CD4-positive, alpha-beta memory T cell (primary cell): ENCODE measurements at regions of chr2 and their contacts with region 1.

Region 1: DNA sequence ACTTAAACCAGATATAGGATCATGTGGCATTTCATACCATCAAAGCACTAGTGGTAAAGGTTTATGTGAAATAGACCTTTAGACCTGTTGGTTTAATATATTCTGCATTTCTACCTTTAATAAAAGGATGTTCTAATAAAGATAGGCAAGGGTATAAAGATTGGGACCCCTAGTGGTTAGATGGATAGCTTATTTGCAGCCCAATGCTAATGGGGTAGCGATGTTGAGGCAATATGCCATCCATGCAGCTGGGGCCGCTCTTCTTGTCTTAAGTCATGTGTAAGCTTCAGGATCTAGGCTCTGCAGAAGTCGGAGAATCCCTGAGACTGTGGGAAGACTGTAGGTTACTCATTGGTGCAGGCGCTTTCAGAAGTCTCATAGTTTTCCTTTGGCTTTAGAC is 114.9 kb downstream of the ICOS start:
- DNase-seq: peak in 4 of 5 donors; percentile 14 to 39 (median 27)
- H3K4me3 ChIP-seq: no peak overlapping the region
- H3K4me3 Mint-ChIP-seq: no peak overlapping the region
- H3K27ac ChIP-seq: no peak overlapping the region
- H3K27ac Mint-ChIP-seq: no peak overlapping the region
- H3K4me1 ChIP-seq: peaks cover 15% of the 10 kb centered on the region
- H3K4me1 Mint-ChIP-seq: peaks cover 9 to 16% (median 12%) of the 10 kb centered on the region in 4 donors
- H3K27me3 ChIP-seq: no peaks in the 10 kb centered on the region
- H3K27me3 Mint-ChIP-seq: peaks cover 0 to 1% of the 10 kb centered on the region in 2 donors

Region 2: GRCh38 chr2:203928849-203929248 is 122.6 kb before region 1 on chr2:
- CTCF ChIA-PET with region 1: interaction called, 91 read pairs
- POLR2A ChIA-PET with region 1: interaction called, 3 read pairs
- intact Hi-C with region 1: loop called (anchors 1 kb)
- DNase-seq: peak in 1 of 5 donors; percentile 45
- H3K4me3 ChIP-seq: no peak overlapping the region
- H3K4me3 Mint-ChIP-seq: no peak overlapping the region
- H3K27ac ChIP-seq: no peak overlapping the region
- H3K27ac Mint-ChIP-seq: peak overlapping the region in 1 of 7 donors; percentile 22
- H3K4me1 ChIP-seq: peaks cover 20% of the 10 kb centered on the region
- H3K4me1 Mint-ChIP-seq: peaks cover 15 to 41% (median 31%) of the 10 kb centered on the region in 4 donors
- H3K27me3 ChIP-seq: no peaks in the 10 kb centered on the region
- H3K27me3 Mint-ChIP-seq: peaks cover 1 to 2% of the 10 kb centered on the region in 2 donors

Region 3: DNA sequence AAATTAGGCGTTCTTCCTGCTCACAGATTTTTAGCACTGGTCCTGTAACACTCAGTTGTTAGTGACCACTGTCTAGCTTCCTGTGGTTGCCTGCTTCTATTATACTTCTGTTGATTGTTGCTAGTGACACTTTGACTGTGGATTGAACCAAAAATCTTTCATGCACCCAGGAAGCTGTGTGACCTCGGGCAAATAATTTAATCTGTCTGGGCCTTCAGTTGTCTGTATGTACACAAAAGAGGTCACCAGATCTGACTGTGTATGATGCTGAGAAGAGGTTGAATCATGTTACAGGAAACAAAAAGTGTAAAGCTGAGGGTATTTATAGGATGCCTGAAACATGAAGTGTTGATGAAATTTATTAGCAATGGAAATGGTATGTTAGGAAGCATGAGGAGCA is 102.2 kb before region 1 on chr2:
- CTCF ChIA-PET with region 1: interaction called, 13 read pairs
- POLR2A ChIA-PET with region 1: interaction called, 9 read pairs
- intact Hi-C with region 1: no loop called
- DNase-seq: peak in 3 of 5 donors; percentile 39 to 60 (median 45)
- H3K4me3 ChIP-seq: no peak overlapping the region
- H3K4me3 Mint-ChIP-seq: peak overlapping the region; percentile 57 to 93 (median 68)
- H3K27ac ChIP-seq: peak overlapping the region; percentile 56
- H3K27ac Mint-ChIP-seq: peak overlapping the region; percentile 88 to 98 (median 93)
- H3K4me1 ChIP-seq: peaks cover 97% of the 10 kb centered on the region
- H3K4me1 Mint-ChIP-seq: peaks cover 71 to 93% (median 83%) of the 10 kb centered on the region in 4 donors
- H3K27me3 ChIP-seq: no peaks in the 10 kb centered on the region
- H3K27me3 Mint-ChIP-seq: no peaks in the 10 kb centered on the region

Region 4: DNA sequence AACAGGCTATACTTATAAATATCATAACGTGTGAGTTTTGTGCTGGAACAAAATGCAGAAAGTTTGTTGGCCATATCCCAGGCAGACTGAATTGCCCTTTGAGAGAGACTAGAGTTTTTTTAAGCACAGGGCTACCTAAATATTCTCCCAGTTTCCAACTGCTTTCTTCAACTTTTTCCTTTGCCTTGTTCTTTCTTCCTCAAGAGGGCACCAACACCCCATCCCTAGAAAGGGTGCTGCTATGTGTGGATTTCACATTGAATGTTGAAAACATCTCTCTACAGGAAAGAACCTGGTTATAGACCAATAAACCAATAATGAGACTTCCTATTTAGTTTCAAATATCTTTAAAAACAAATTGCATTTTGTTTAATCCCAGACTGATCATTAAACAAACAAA is 27.0 kb before region 1 on chr2:
- CTCF ChIA-PET with region 1: interaction called, 40 read pairs
- POLR2A ChIA-PET with region 1: no interaction called
- intact Hi-C with region 1: loop called (anchors 2 kb)
- DNase-seq: no peak
- H3K4me3 ChIP-seq: no peak overlapping the region
- H3K4me3 Mint-ChIP-seq: no peak overlapping the region
- H3K27ac ChIP-seq: no peak overlapping the region
- H3K27ac Mint-ChIP-seq: peak overlapping the region in 4 of 7 donors; percentile 38 to 64 (median 54)
- H3K4me1 ChIP-seq: peaks cover 45% of the 10 kb centered on the region
- H3K4me1 Mint-ChIP-seq: peaks cover 27 to 41% (median 35%) of the 10 kb centered on the region in 4 donors
- H3K27me3 ChIP-seq: no peaks in the 10 kb centered on the region
- H3K27me3 Mint-ChIP-seq: no peaks in the 10 kb centered on the region

Region 5: DNA sequence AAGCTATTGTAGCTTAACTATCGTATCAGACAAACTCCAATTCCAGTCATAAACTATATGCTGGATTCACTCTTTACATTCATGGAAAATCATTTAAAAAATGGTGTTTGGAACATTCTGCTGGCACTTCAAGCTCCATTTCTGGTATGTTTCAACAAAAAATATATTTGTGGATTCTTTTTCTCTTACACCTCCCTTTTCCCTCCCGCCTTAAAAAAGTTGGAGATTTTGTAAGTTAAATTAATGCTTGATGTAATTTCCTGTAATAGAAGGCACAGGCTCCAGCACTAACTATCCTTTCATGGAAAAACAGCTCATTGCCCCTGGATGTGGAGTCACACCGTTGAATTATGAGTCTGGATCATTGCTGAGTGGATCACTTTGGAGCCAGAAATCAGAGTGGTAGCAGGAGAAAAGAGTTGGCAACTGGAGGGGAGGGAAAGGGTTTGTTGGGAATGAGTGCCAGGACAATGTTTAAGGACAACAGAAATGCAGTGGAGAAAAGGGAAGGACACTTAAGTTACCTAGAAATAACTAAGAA is 12.1 kb before region 1 on chr2:
- CTCF ChIA-PET with region 1: interaction called, 22 read pairs
- POLR2A ChIA-PET with region 1: no interaction called
- intact Hi-C with region 1: no loop called
- DNase-seq: no peak
- H3K4me3 ChIP-seq: no peak overlapping the region
- H3K4me3 Mint-ChIP-seq: no peak overlapping the region
- H3K27ac ChIP-seq: no peak overlapping the region
- H3K27ac Mint-ChIP-seq: peak overlapping the region in 1 of 7 donors; percentile 23
- H3K4me1 ChIP-seq: no peaks in the 10 kb centered on the region
- H3K4me1 Mint-ChIP-seq: peaks cover 0 to 4% (median 2%) of the 10 kb centered on the region in 4 donors
- H3K27me3 ChIP-seq: no peaks in the 10 kb centered on the region
- H3K27me3 Mint-ChIP-seq: no peaks in the 10 kb centered on the region

Region 6: GRCh38 chr2:205605628-205606304 is 1554.3 kb after region 1 on chr2:
- CTCF ChIA-PET with region 1: no interaction called
- POLR2A ChIA-PET with region 1: no interaction called
- intact Hi-C with region 1: no loop called
- DNase-seq: no peak
- H3K4me3 ChIP-seq: no peak overlapping the region
- H3K4me3 Mint-ChIP-seq: no peak overlapping the region
- H3K27ac ChIP-seq: no peak overlapping the region
- H3K27ac Mint-ChIP-seq: no peak overlapping the region
- H3K4me1 ChIP-seq: no peaks in the 10 kb centered on the region
- H3K4me1 Mint-ChIP-seq: no peaks in the 10 kb centered on the region
- H3K27me3 ChIP-seq: no peaks in the 10 kb centered on the region
- H3K27me3 Mint-ChIP-seq: peaks cover 11 to 23% of the 10 kb centered on the region in 2 donors